ENCODE measurements at regions of chr11 and their contacts with region 1.

Region 1: GRCh38 chr11:727859-728748 is 19.2 kb upstream of the TALDO1 start:
- DNase-seq: peak; percentile 95
- H3K4me3 ChIP-seq: peak overlapping the region in 1 of 8 donors; percentile 19
- H3K27ac ChIP-seq: peak overlapping the region in 5 of 8 donors; percentile 51 to 88 (median 61)
- H3K4me1 ChIP-seq: peaks cover 23 to 61% (median 36%) of the 10 kb centered on the region in 6 donors
- H3K27me3 ChIP-seq: peaks cover 0 to 55% (median 11%) of the 10 kb centered on the region in 7 donors
- CTCF ChIP-seq: peak; percentile 93 to 99 (median 97)
- POLR2A ChIP-seq: no peak

Region 2: DNA sequence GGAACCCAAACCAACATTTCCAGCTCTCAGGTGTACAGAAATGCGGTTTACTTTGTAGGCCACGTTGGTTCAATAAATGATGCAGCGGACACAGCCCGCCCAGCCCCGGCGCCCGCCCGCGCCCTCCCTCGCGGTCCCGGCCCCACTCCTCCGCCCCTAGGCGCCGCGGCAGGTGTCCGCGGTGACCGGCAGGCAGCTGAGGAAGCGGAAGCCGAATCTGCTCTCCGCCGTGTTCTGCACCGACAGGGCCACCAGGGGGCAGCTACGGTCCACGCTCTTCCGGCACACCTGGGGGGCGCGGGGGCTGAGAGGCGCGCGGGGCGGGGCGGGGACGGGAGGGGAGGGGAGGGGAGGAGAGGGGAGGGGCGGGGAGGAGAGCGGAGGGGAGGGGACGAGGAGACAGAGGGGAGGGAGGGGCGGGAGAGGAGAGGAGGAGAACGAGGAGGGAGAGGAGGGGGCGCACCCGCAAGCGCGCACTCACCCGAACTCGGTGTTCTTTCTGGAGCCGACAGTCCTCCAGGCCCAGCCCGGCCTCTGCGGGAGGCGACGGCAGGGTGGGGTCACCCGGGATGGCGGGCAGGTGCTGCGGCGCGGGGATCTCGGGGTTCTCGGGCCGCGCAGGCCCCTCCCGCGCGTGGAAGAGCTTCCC is 173.2 kb before region 1 on chr11:
- intact Hi-C with region 1: loop called (anchors 10 kb)
- DNase-seq: peak; percentile 95
- H3K4me3 ChIP-seq: peak overlapping the region; percentile 20 to 73 (median 42)
- H3K27ac ChIP-seq: peak overlapping the region in 2 of 8 donors; percentile 1 to 31
- H3K4me1 ChIP-seq: peaks cover 5 to 48% (median 31%) of the 10 kb centered on the region in 6 donors
- H3K27me3 ChIP-seq: peaks cover 2 to 73% (median 37%) of the 10 kb centered on the region in 7 donors
- CTCF ChIP-seq: peak; percentile 36 to 88 (median 67)
- POLR2A ChIP-seq: no peak

Region 3: GRCh38 chr11:662689-663274 is 65.3 kb before region 1 on chr11:
- intact Hi-C with region 1: loop called (anchors 5 kb)
- DNase-seq: peak; percentile 87
- H3K4me3 ChIP-seq: no peak overlapping the region
- H3K27ac ChIP-seq: no peak overlapping the region
- H3K4me1 ChIP-seq: peaks cover 4 to 54% (median 24%) of the 10 kb centered on the region in 6 donors
- H3K27me3 ChIP-seq: no peaks in the 10 kb centered on the region
- CTCF ChIP-seq: peak; percentile 55 to 87 (median 81)
- POLR2A ChIP-seq: no peak